Ascending aorta (tissue), 2 donors: ENCODE measurements at regions of chr18 and their contacts with region 1.

Region 1: DNA sequence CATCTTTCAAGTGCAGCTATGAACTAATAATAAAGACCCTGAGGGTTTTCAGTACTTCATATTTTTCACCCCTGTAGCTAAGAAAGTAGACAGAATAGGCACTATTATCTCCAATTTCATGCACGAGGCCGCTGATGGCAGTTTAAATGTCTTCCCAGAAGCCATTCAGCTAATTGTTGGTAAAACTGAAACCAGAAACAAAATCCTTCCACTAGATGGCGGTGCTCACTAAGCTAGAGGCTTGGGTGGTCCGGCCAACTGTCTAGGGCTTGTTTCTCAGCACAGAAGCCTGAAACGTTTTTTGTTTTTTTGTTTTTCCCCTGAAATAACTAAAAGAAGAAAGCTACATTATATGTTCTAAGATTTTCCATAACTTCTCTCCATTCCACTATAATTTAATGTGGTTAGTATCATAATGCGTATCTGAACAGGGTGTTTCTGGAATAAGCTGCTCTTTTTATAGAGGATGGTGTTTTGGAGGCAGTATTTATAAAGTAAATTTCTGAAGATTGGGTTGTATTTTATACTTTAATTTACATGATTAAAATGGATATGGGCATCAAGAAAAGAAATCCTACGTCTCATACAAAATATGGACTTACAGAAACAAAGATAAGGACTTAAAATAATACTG is 159.4 kb downstream of the PIK3C3 start:
- DNase-seq: peak in 1 of 2 donors; percentile 72
- H3K4me3 ChIP-seq: no peak overlapping the region
- H3K27ac ChIP-seq: no peak overlapping the region
- H3K4me1 ChIP-seq: no peaks in the 10 kb centered on the region
- H3K27me3 ChIP-seq: no peaks in the 10 kb centered on the region
- CTCF ChIP-seq: peak; percentile 63 to 93 (median 89)

Region 2: GRCh38 chr18:42298759-42299675 is 184.6 kb after region 1 on chr18:
- intact Hi-C with region 1: loop called (anchors 2 kb)
- DNase-seq: peak in 1 of 2 donors; percentile 79
- H3K4me3 ChIP-seq: peak overlapping the region in 1 of 2 donors; percentile 43
- H3K27ac ChIP-seq: no peak overlapping the region
- H3K4me1 ChIP-seq: no peaks in the 10 kb centered on the region
- H3K27me3 ChIP-seq: no peaks in the 10 kb centered on the region
- CTCF ChIP-seq: peak; percentile 34 to 85 (median 85)

Region 3: DNA sequence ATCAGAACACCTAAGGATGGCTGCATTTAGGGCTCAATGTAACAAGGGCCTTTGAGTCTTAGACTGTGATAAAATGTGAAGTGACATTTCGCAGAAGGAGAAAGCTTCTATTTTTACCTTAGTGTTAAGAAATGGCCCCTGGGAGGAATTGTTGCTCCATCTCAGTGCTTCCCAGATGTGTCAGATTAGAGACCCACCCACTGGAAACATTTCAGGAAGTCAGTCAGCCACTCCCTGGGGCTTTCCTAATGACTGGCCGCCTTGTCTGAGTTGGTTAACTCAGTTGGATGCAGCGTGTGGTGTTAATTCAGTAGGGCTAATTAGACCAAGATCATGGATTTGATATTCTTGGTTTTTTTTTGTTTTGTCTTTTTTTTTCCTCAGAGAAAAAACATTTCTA is 196.5 kb after region 1 on chr18:
- intact Hi-C with region 1: no loop called
- DNase-seq: peak in 1 of 2 donors; percentile 68
- H3K4me3 ChIP-seq: no peak overlapping the region
- H3K27ac ChIP-seq: no peak overlapping the region
- H3K4me1 ChIP-seq: no peaks in the 10 kb centered on the region
- H3K27me3 ChIP-seq: no peaks in the 10 kb centered on the region
- CTCF ChIP-seq: no peak

Region 4: GRCh38 chr18:43587538-43588153 is 1473.2 kb after region 1 on chr18:
- intact Hi-C with region 1: loop called (anchors 2 kb)
- DNase-seq: no peak
- H3K4me3 ChIP-seq: no peak overlapping the region
- H3K27ac ChIP-seq: no peak overlapping the region
- H3K4me1 ChIP-seq: no peaks in the 10 kb centered on the region
- H3K27me3 ChIP-seq: no peaks in the 10 kb centered on the region
- CTCF ChIP-seq: peak in 2 of 3 experiments; percentile 56 to 64